Testis (tissue), 5 donors: ENCODE measurements at regions of chr11 and their contacts with region 1.

Region 1: DNA sequence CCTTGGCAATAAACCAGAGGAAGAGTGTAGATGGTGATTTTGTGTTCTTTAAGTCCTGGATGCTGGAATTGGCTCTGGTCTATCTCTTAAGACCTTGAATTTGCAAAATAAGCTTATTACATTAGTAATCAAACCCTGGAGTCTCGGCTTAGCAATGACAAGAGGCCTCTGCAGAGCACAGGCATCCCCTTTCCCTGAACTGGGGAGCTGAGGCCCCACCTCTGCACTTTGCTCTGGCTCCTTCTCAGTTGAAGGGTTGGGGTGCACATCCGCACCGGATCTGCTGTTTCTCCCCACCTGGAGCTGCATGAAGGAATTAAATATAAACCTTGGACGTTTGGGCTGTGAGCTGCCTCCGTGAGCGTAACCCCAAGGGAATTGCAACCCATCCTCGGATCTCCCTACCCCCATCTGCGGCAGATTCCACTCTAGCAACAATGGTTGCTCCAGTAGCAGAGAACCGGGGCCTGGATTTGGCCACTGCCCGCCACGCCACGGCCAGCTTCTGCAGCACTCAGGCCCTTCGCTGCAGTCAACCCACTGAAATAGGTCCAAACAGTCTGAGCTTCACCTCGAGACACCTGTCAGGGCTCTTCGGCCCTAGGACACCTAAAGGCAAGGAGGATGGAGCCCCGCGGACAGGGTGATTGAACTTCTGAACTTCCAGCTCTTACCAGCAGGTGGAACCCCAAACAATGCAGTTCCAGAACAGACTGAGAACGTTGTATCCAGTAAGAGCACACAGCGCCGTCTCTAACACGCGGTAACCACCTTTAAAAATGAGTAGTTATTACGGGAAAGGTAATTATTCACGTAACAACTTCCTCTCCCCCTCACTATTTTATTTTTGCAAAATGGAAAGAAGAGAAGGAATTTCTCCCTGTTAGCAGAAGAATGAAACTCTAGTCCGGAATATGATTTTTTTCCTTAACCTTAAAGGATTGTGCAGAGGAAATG is 54.8 kb upstream of the CAPRIN1 start:
- DNase-seq: peak; percentile 84
- H3K4me3 ChIP-seq: no peak overlapping the region
- H3K27ac ChIP-seq: no peak overlapping the region
- H3K4me1 ChIP-seq: no peaks in the 10 kb centered on the region
- H3K27me3 ChIP-seq: no peaks in the 10 kb centered on the region
- CTCF ChIP-seq: peak; percentile 56 to 74 (median 69)
- POLR2A ChIP-seq: no peak

Region 2: GRCh38 chr11:33620423-33621171 is 376.2 kb before region 1 on chr11:
- intact Hi-C with region 1: no loop called
- DNase-seq: no peak
- H3K4me3 ChIP-seq: no peak overlapping the region
- H3K27ac ChIP-seq: no peak overlapping the region
- H3K4me1 ChIP-seq: peaks cover 4% of the 10 kb centered on the region
- H3K27me3 ChIP-seq: no peaks in the 10 kb centered on the region
- CTCF ChIP-seq: no peak
- POLR2A ChIP-seq: no peak

Region 3: GRCh38 chr11:34366522-34366921 is 369.7 kb after region 1 on chr11:
- intact Hi-C with region 1: loop called (anchors 10 kb)
- DNase-seq: no peak
- H3K4me3 ChIP-seq: no peak overlapping the region
- H3K27ac ChIP-seq: no peak overlapping the region
- H3K4me1 ChIP-seq: no peaks in the 10 kb centered on the region
- H3K27me3 ChIP-seq: no peaks in the 10 kb centered on the region
- CTCF ChIP-seq: peak in 1 of 3 experiments; percentile 14
- POLR2A ChIP-seq: no peak

Region 4: GRCh38 chr11:34680918-34681554 is 684.3 kb after region 1 on chr11:
- intact Hi-C with region 1: no loop called
- DNase-seq: no peak
- H3K4me3 ChIP-seq: no peak overlapping the region
- H3K27ac ChIP-seq: no peak overlapping the region
- H3K4me1 ChIP-seq: no peaks in the 10 kb centered on the region
- H3K27me3 ChIP-seq: no peaks in the 10 kb centered on the region
- CTCF ChIP-seq: no peak
- POLR2A ChIP-seq: no peak